ENCODE measurements at regions of chr7 and their contacts with region 1.

Region 1: DNA sequence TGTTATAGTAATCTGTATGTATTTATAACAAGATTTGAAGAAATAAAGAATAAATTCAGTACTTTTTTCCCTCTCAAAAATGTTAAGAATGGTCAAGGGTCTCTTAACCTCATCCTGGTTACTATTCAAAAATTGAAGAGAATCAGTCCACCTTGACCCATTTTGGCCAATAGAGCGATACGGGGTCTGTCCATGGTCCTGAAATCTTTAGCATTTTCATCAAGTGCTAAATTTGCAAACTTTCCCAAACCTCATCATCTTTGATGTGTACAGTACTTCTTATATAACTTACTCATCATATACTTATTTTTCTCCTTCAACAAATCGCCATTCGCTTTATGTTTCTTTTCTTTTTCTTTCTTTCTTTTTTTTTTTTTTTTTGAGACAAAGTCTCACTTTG is 23.6 kb downstream of the TMEM178B start:
- DNase-seq: no peak
- ATAC-seq: no peak
- H3K4me3 ChIP-seq: no peak overlapping the region
- H3K27ac ChIP-seq: no peak overlapping the region
- H3K4me1 ChIP-seq: no peaks in the 10 kb centered on the region
- H3K27me3 ChIP-seq: peaks cover 2% of the 10 kb centered on the region; the same call in 1 of the 2 replicates
- CTCF ChIP-seq: no peak

Region 2: DNA sequence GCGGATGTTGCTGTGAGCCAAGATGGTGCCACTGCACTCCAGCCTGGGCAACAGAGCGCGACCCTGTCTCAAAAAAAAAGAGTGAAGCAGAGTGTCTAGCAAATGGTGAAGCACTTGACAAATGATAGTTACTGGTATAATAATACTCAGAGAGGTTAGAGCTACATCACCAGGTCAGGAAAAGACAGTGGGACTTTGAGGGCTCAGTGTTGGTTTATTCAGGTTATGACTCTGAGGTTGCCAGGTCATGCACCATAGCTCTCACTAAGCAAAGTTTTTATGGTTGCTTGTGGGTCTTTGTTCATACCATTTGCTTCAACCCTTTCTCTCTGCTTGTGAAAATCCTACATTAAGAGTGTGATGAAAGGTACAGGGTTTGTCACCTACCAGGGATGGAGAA is 96.3 kb before region 1 on chr7:
- CTCF ChIA-PET with region 1: no interaction called
- POLR2A ChIA-PET with region 1: no interaction called
- in situ Hi-C with region 1: no loop called
- intact Hi-C with region 1: no loop called
- DNase-seq: no peak
- ATAC-seq: no peak
- H3K4me3 ChIP-seq: no peak overlapping the region
- H3K27ac ChIP-seq: no peak overlapping the region
- H3K4me1 ChIP-seq: no peaks in the 10 kb centered on the region
- H3K27me3 ChIP-seq: peaks cover 4% of the 10 kb centered on the region
- CTCF ChIP-seq: no peak

Region 3: DNA sequence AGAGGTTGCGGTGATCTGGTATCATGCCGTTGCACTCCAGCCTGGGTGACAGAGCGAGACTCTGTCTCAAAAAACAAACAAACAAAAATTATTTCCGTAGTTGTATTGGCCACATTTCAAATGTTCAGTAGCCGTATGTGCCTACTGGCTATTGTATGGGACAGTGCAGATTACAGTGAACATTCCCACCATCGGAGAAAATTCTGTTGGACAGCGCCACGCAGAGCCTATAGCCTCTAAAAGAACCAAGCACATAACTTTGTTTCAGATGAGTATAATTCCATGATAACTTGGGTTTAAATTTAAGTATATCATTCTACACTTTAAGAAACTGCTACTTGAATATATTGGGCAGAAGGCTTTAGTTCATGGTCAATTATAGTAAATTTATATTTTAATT is 18.2 kb before region 1 on chr7:
- CTCF ChIA-PET with region 1: no interaction called
- POLR2A ChIA-PET with region 1: no interaction called
- in situ Hi-C with region 1: no loop called
- intact Hi-C with region 1: no loop called
- DNase-seq: no peak
- ATAC-seq: no peak
- H3K4me3 ChIP-seq: no peak overlapping the region
- H3K27ac ChIP-seq: no peak overlapping the region
- H3K4me1 ChIP-seq: no peaks in the 10 kb centered on the region
- H3K27me3 ChIP-seq: peaks cover 34% of the 10 kb centered on the region
- CTCF ChIP-seq: no peak

Region 4: GRCh38 chr7:141144921-141145629 is 47.6 kb after region 1 on chr7:
- CTCF ChIA-PET with region 1: no interaction called
- POLR2A ChIA-PET with region 1: interaction called, 4 read pairs
- in situ Hi-C with region 1: no loop called
- intact Hi-C with region 1: loop called (anchors 5 kb)
- DNase-seq: no peak
- ATAC-seq: peak; percentile 42; the same call in 1 of the 2 replicates
- H3K4me3 ChIP-seq: no peak overlapping the region
- H3K27ac ChIP-seq: no peak overlapping the region
- H3K4me1 ChIP-seq: no peaks in the 10 kb centered on the region
- H3K27me3 ChIP-seq: no peaks in the 10 kb centered on the region
- CTCF ChIP-seq: no peak

Region 5: GRCh38 chr7:141208539-141208938 is 111.1 kb after region 1 on chr7:
- CTCF ChIA-PET with region 1: no interaction called
- POLR2A ChIA-PET with region 1: no interaction called
- in situ Hi-C with region 1: no loop called
- intact Hi-C with region 1: loop called (anchors 5 kb)
- DNase-seq: no peak
- ATAC-seq: no peak
- H3K4me3 ChIP-seq: no peak overlapping the region
- H3K27ac ChIP-seq: no peak overlapping the region
- H3K4me1 ChIP-seq: no peaks in the 10 kb centered on the region
- H3K27me3 ChIP-seq: no peaks in the 10 kb centered on the region
- CTCF ChIP-seq: no peak

Region 6: GRCh38 chr7:141551094-141551781 is 453.8 kb after region 1 on chr7 and contains the start of gene AGK:
- CTCF ChIA-PET with region 1: interaction called, 10 read pairs
- POLR2A ChIA-PET with region 1: no interaction called
- in situ Hi-C with region 1: no loop called
- intact Hi-C with region 1: no loop called
- DNase-seq: no peak
- ATAC-seq: peak; percentile 98
- H3K4me3 ChIP-seq: peak within 1 kb of the TSS; percentile 72 to 74
- H3K27ac ChIP-seq: peak within 1 kb of the TSS; percentile 69
- H3K4me1 ChIP-seq: peaks cover 2% of the 10 kb centered on the region; the same call in 1 of the 2 replicates
- H3K27me3 ChIP-seq: no peaks in the 10 kb centered on the region
- CTCF ChIP-seq: no peak
- total RNA-seq, gene AGK: 32.6 TPM